MCF 10A (cell line): ENCODE measurements at regions of chr6 and their contacts with region 1.

Region 1: GRCh38 chr6:110815217-110816109 is at the start of gene CDK19:
- DNase-seq: peak; percentile 100
- H3K4me3 Mint-ChIP-seq: peak within 1 kb of the TSS; percentile 98
- H3K27ac Mint-ChIP-seq: peak within 1 kb of the TSS; percentile 95
- H3K4me1 Mint-ChIP-seq: peaks cover 8% of the 10 kb centered on the region
- H3K27me3 Mint-ChIP-seq: no peaks in the 10 kb centered on the region
- CTCF ChIP-seq: no peak
- total RNA-seq, gene CDK19: 10.2 and 16.8 TPM in 2 replicates

Region 2: GRCh38 chr6:110528101-110528929 is 287.1 kb before region 1 on chr6:
- CTCF ChIA-PET with region 1: no interaction called
- POLR2A ChIA-PET with region 1: interaction called, 3 read pairs
- intact Hi-C with region 1: loop called (anchors 5 kb)
- DNase-seq: peak; percentile 76
- H3K4me3 Mint-ChIP-seq: no peak overlapping the region
- H3K27ac Mint-ChIP-seq: peak overlapping the region; percentile 66
- H3K4me1 Mint-ChIP-seq: peaks cover 21% of the 10 kb centered on the region
- H3K27me3 Mint-ChIP-seq: no peaks in the 10 kb centered on the region
- CTCF ChIP-seq: peak; percentile 76

Region 3: GRCh38 chr6:110703010-110703905 is 112.2 kb before region 1 on chr6:
- CTCF ChIA-PET with region 1: interaction called, 4 read pairs
- POLR2A ChIA-PET with region 1: interaction called, 14 read pairs
- intact Hi-C with region 1: loop called (anchors 5 kb)
- DNase-seq: no peak
- H3K4me3 Mint-ChIP-seq: no peak overlapping the region
- H3K27ac Mint-ChIP-seq: peak overlapping the region; percentile 3
- H3K4me1 Mint-ChIP-seq: peaks cover 24% of the 10 kb centered on the region
- H3K27me3 Mint-ChIP-seq: no peaks in the 10 kb centered on the region
- CTCF ChIP-seq: no peak

Region 4: DNA sequence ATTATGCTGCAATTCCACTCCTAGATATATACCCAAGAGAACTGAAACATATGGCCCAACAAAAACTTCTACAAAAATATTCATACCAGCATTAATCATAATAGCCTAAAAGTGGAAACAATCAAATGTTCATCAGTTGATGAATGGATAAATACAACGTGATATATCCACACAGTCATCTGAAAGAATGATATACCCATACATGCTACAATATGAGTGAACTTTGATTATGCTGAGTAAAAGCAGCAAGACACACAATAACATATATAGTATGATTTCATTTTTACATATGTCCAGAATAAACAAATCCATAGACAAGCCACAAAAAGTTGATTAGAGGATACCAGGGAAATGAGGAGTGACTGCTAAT is 30.9 kb before region 1 on chr6:
- CTCF ChIA-PET with region 1: no interaction called
- POLR2A ChIA-PET with region 1: no interaction called
- intact Hi-C with region 1: no loop called
- DNase-seq: no peak
- H3K4me3 Mint-ChIP-seq: no peak overlapping the region
- H3K27ac Mint-ChIP-seq: no peak overlapping the region
- H3K4me1 Mint-ChIP-seq: peaks cover 9% of the 10 kb centered on the region
- H3K27me3 Mint-ChIP-seq: no peaks in the 10 kb centered on the region
- CTCF ChIP-seq: no peak

Region 5: DNA sequence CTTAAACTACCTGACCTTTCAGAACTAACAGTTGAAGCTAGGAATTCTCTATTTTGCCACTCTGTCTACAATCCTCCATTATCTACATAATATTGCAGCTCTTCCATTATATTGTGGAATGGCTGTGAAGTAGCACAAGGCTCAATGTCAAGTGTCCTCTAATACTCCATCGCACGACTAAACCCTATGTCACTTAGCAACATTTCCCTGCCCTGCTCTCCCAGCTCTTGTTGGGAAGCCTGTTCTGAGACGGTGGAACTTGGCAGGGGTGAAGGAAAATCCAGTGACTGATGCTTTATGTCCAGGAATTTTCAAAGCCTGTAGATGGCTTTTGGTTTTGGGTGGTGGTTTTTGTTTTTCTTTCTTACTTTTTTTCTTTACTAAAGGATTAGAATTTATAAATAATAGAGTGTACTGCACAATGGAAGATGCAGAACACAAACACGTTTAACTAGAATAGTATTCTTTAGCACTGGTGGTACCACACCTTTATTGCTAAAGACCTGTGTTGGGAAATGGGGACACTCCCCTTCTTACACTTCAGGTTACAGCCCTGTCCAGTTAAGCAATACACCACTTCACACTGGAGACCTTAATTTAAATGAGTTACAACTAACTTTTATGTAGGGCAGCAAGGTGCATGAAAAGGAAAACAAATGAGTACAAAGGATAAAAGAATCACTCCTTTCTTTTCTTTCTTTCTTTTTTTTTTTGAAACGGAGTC is 38.5 kb after region 1 on chr6:
- CTCF ChIA-PET with region 1: no interaction called
- POLR2A ChIA-PET with region 1: interaction called, 15 read pairs
- intact Hi-C with region 1: no loop called
- DNase-seq: peak; percentile 72
- H3K4me3 Mint-ChIP-seq: no peak overlapping the region
- H3K27ac Mint-ChIP-seq: no peak overlapping the region
- H3K4me1 Mint-ChIP-seq: peaks cover 11% of the 10 kb centered on the region
- H3K27me3 Mint-ChIP-seq: no peaks in the 10 kb centered on the region
- CTCF ChIP-seq: no peak

Region 6: DNA sequence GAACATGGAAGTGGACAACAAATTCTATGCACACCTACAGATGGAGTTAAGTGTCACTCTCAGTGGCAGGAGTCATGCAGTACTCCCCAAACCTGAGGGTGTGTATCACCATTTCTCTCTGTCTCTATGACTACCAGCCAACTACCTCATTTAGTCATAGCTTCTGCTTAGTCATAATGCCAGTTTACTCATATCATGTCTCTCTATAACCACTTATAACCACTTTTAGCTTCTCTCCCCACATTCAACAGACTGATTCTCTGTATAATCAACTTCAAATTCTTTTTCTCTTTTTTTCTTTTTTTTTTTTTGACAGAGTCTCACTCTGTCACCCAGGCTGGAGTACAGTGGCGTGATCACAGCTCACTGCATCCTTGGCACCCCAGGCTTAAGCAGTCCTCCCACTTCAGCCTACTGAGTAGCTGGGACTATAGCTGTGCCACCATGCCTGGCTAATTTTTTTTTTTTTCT is 129.3 kb after region 1 on chr6:
- CTCF ChIA-PET with region 1: no interaction called
- POLR2A ChIA-PET with region 1: interaction called, 10 read pairs
- intact Hi-C with region 1: no loop called
- DNase-seq: peak; percentile 87
- H3K4me3 Mint-ChIP-seq: no peak overlapping the region
- H3K27ac Mint-ChIP-seq: peak overlapping the region; percentile 89
- H3K4me1 Mint-ChIP-seq: peaks cover 6% of the 10 kb centered on the region
- H3K27me3 Mint-ChIP-seq: no peaks in the 10 kb centered on the region
- CTCF ChIP-seq: no peak

Region 7: DNA sequence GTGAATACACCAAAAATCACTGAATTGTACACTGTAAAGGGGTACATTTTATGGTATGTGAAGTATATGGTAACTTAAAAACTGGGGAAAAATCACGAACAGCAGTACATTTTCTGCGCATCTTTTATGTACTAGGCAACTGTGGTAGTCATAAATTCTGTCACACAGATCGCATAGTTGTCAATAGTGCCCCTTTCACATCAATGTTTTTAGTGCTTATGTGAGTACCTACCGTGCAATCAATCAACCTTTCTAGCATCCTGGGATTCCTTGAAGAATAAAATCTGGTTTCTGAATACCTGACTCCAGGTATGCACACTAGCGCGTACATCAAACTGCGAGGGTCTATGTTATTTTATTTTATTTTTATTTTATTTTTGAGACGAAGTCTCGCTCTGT is 165.7 kb after region 1 on chr6:
- CTCF ChIA-PET with region 1: no interaction called
- POLR2A ChIA-PET with region 1: interaction called, 26 read pairs
- intact Hi-C with region 1: no loop called
- DNase-seq: no peak
- H3K4me3 Mint-ChIP-seq: peak overlapping the region; percentile 99
- H3K27ac Mint-ChIP-seq: peak overlapping the region; percentile 100
- H3K4me1 Mint-ChIP-seq: peaks cover 16% of the 10 kb centered on the region
- H3K27me3 Mint-ChIP-seq: no peaks in the 10 kb centered on the region
- CTCF ChIP-seq: no peak